Ovary (tissue), 10 donors: ENCODE measurements at regions of chr21 and their contacts with region 1.

Region 1: GRCh38 chr21:43287795-43288755 is 119.3 kb downstream of the CRYAA start:
- DNase-seq: peak in 2 of 5 donors; percentile 8 to 21
- H3K4me3 ChIP-seq: no peak overlapping the region
- H3K27ac ChIP-seq: no peak overlapping the region
- H3K4me1 ChIP-seq: no peaks in the 10 kb centered on the region
- H3K27me3 ChIP-seq: no peaks in the 10 kb centered on the region
- CTCF ChIP-seq: no peak
- EP300 ChIP-seq: no peak
- POLR2A ChIP-seq: no peak

Region 2: DNA sequence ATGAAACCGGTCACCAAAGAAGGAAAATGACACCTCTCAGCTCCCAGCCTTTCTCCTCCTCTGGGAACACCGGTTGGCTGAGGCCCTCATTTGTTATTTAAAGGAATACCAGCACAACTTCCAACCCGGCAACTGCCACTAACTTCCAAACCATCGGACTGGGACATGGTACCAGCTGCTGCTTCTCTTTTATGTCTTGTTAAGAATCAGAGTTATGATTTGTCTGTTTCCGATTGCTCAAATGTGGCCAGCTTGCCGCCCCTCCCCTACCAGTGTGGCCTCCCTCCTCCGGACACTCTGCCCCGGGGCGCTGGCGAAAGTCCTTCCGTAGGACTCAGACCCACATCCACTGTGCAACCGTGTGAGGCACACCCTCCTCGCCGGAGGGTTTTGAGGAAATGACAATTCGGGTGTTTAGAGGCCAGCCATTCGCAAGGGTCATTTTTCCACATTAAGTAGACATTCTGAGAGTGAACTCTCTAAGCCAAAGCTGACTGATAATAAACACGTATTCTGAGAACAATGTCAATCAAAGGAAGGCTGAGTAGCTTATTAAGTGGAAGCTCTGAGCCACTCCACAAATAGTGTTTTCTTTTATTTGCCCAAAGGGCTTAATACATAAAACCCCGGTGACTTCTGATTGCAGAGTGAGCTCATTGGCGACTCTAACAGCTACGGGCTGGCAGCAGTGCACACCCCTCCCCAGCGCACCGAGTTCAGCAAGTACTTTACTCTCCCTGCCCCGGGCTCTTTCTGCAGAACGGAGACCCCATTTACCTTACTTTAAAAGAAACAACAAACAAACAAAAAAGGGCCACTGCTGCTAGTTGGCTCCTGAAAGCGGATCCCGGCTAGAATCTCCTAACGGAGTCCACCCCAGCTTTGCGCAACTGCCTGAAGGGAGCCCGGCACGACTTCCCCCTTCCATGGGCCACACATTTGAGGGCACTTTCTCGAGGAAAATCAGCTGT is 1526.6 kb before region 1 on chr21:
- intact Hi-C with region 1: no loop called
- DNase-seq: no peak
- H3K4me3 ChIP-seq: no peak overlapping the region
- H3K27ac ChIP-seq: no peak overlapping the region
- H3K4me1 ChIP-seq: no peaks in the 10 kb centered on the region
- H3K27me3 ChIP-seq: no peaks in the 10 kb centered on the region
- CTCF ChIP-seq: no peak
- EP300 ChIP-seq: no peak
- POLR2A ChIP-seq: no peak

Region 3: GRCh38 chr21:43306911-43307676 is 19.0 kb after region 1 on chr21:
- intact Hi-C with region 1: loop called in 1 of 4 experiments (anchors 2 kb)
- DNase-seq: peak in 2 of 5 donors; percentile 30 to 49
- H3K4me3 ChIP-seq: no peak overlapping the region
- H3K27ac ChIP-seq: peak overlapping the region in 1 of 2 donors; percentile 34
- H3K4me1 ChIP-seq: peaks cover 8% of the 10 kb centered on the region
- H3K27me3 ChIP-seq: no peaks in the 10 kb centered on the region
- CTCF ChIP-seq: no peak
- EP300 ChIP-seq: no peak
- POLR2A ChIP-seq: no peak

Region 4: DNA sequence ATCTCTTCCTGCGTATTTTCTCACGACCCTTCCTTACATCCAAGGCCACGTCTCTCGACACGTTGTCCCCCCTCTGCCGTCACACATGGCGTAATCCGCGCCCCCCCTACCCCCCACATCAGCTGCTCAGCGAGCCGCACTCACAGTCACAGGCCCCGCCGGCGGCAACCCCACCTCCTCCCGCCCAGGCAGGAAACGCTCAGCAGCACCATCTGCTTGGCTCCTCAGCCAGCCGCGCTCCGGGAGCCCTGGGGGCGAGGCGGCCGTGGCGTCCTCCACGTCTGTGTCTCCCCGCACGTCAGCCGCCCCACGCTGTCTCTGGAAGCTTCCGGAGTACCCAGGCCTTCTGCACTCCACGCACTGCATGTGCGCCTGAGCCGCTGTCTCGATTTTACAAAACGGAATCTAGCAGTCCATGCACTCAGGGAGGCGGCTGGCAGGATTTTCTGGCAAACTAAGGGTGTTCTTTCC is 74.3 kb after region 1 on chr21:
- intact Hi-C with region 1: no loop called
- DNase-seq: peak; percentile 74 to 87 (median 85)
- H3K4me3 ChIP-seq: no peak overlapping the region
- H3K27ac ChIP-seq: peak overlapping the region in 1 of 2 donors; percentile 71
- H3K4me1 ChIP-seq: peaks cover 11% of the 10 kb centered on the region
- H3K27me3 ChIP-seq: no peaks in the 10 kb centered on the region
- CTCF ChIP-seq: no peak
- EP300 ChIP-seq: no peak
- POLR2A ChIP-seq: no peak

Region 5: GRCh38 chr21:43624339-43624738 is 336.3 kb after region 1 on chr21:
- intact Hi-C with region 1: no loop called
- DNase-seq: no peak
- H3K4me3 ChIP-seq: no peak overlapping the region
- H3K27ac ChIP-seq: no peak overlapping the region
- H3K4me1 ChIP-seq: no peaks in the 10 kb centered on the region
- H3K27me3 ChIP-seq: no peaks in the 10 kb centered on the region
- CTCF ChIP-seq: no peak
- EP300 ChIP-seq: no peak
- POLR2A ChIP-seq: no peak

Region 6: DNA sequence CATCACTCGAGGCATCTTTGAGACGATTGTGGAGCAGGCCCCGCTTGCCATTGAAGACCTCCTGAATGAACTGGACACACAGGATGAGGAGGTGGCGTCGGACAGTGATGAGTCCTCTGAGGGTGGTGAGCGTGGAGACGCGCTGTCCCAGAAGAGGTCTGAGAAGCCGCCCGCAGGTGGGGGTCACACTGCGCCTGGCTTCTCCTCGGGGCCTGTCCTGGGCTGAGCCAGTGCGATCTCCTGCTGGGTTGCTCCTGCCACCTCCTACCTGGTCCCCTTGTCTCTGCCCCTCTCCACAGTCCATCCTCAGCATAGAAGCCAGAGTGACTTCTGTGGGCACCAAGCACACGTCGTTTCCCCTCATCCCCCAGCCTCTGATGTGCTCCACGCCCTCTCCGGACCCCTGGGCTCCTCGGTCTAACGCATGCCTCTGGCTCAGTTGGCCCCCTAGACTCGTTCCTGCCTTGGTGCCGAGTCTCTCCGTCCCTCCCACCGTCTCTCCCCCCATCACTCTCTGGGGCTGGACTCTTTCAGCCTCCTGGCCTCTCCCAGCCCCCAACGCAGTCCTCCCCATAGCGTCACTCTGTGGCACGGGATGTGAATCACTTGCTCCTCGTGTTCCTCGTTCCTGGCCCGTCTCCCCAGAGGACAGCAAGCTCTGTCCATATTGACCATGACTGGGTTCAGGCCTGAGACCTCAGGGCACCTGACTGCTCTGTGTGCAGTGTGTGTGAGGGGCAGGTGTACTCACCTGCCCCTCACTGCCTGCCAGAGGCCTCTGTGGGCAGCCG is 510.0 kb after region 1 on chr21:
- intact Hi-C with region 1: no loop called
- DNase-seq: no peak
- H3K4me3 ChIP-seq: no peak overlapping the region
- H3K27ac ChIP-seq: no peak overlapping the region
- H3K4me1 ChIP-seq: no peaks in the 10 kb centered on the region
- H3K27me3 ChIP-seq: no peaks in the 10 kb centered on the region
- CTCF ChIP-seq: no peak
- EP300 ChIP-seq: no peak
- POLR2A ChIP-seq: no peak